ENCODE measurements at regions of chr19 and their contacts with region 1.

Region 1: GRCh38 chr19:45439569-45440254 is 16.0 kb upstream of the ERCC1 start:
- DNase-seq: peak; percentile 79 to 82 (median 79)
- ATAC-seq: peak; percentile 49 to 69 (median 55)
- H3K4me3 ChIP-seq: peak overlapping the region; percentile 64 to 76 (median 67)
- H3K27ac ChIP-seq: peak overlapping the region; percentile 86 to 88 (median 87)
- H3K4me1 ChIP-seq: peaks cover 0 to 10% (median 4%) of the 10 kb centered on the region in 4 donors
- H3K27me3 ChIP-seq: no peaks in the 10 kb centered on the region
- CTCF ChIP-seq: peak; percentile 99 to 100 (median 100)
- POLR2A ChIP-seq: no peak

Region 2: DNA sequence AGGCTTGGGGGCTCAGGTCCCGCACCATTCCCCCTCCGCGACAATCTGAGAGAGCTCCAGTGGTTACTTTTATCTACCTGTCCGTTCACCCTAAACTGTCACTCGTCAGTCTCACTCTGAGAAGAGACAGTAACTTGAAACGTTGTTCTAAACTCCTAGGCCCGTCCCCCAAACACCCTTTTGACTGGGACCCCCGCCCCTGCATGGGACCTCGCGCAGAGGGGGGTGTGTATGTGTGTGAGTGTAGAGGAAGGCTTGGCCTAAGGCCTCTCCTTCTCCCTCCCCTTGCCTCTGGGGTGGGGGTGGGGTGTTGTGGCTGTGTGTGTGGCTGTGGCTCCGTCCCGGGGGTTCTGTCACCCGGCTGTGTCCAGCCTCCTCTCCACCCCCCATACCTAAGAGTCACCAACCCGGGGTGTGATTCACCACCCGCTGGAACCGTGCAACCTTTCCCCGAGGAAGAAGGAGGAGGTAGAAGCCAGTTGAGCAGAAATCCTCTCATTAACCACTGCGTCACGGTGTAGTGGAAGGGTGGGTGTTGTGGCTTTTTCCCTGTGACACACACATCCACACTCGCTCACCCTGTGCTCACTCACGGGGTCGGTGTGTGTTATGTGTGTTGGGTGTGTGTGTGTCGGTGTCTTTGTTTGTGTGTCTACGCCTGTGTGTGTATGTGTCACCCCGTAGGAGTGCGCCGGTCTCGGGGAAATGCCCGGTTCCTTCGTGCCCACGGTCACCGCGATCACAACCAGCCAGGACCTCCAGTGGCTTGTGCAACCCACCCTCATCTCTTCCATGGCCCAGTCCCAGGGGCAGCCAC is 30.4 kb after region 1 on chr19:
- intact Hi-C with region 1: loop called (anchors 5 kb)
- DNase-seq: no peak
- ATAC-seq: no peak
- H3K4me3 ChIP-seq: peak overlapping the region; percentile 47 to 76 (median 61)
- H3K27ac ChIP-seq: peak overlapping the region; percentile 76 to 92 (median 90)
- H3K4me1 ChIP-seq: peaks cover 0 to 19% (median 7%) of the 10 kb centered on the region in 4 donors
- H3K27me3 ChIP-seq: no peaks in the 10 kb centered on the region
- CTCF ChIP-seq: no peak
- POLR2A ChIP-seq: no peak

Region 3: GRCh38 chr19:45478454-45479238 is 38.9 kb after region 1 on chr19:
- intact Hi-C with region 1: loop called (anchors 5 kb)
- DNase-seq: peak; percentile 77 to 88 (median 87)
- ATAC-seq: peak; percentile 93 to 97 (median 96)
- H3K4me3 ChIP-seq: peak overlapping the region; percentile 36 to 52 (median 40)
- H3K27ac ChIP-seq: peak overlapping the region; percentile 87 to 93 (median 93)
- H3K4me1 ChIP-seq: peaks cover 0 to 8% (median 0%) of the 10 kb centered on the region in 4 donors
- H3K27me3 ChIP-seq: no peaks in the 10 kb centered on the region
- CTCF ChIP-seq: peak; percentile 96 to 98 (median 97)
- POLR2A ChIP-seq: peak; percentile 59

Measured in right lobe of liver (tissue), 6 donors.